Keratinocyte (primary cell): ENCODE measurements at regions of chr17 and their contacts with region 1.

Region 1: GRCh38 chr17:44636562-44636961 is 19.7 kb upstream of the MEIOC start:
- DNase-seq: no peak
- H3K4me3 ChIP-seq: no peak overlapping the region
- H3K27ac ChIP-seq: no peak overlapping the region
- H3K4me1 ChIP-seq: no peaks in the 10 kb centered on the region
- H3K27me3 ChIP-seq: peaks cover 4% of the 10 kb centered on the region
- CTCF ChIP-seq: peak in 2 of 3 experiments; percentile 8 to 37

Region 2: DNA sequence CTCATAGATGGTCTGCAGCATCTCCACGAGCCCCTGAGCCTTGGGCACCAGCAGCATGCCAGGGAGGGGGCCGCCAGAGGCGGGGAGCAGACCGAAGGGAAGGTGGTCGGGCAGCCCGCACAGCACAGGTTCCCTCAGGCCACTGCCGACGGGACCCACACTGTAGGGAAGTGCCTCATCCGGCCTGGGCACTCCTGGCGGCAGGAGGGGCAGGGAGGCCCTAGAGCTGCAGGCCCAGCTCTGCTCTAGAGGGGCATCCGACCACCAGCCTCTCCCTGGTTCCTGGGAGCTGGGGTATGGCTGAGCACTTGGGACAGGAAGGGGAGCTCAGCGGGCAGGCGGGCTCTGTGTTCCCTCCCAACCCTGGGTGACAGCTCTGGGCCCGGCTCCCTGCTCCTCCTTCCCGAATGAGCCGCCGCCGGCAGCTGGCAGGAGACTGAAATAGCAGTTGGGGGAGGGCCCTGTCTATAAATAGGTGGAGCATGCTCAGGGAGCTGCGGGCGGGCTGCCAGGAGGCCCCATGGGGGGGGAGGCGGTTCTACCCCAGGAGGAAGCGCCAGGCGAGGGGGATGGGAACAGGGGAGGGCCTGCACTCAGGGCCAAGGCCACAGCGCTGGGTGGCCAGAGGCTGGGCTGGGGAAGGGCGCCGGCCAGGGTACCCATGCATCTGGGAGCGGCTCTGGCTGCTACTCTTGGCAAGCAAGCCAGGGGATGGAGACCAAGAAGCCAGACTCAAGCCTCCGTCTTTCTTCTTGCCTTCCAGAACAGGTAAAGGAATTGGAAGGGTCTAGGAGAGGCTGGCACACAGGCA is 525.5 kb before region 1 on chr17:
- dilution Hi-C with region 1: no loop called
- DNase-seq: peak; percentile 54
- H3K4me3 ChIP-seq: peak overlapping the region in 2 of 3 experiments; percentile 1 to 15
- H3K27ac ChIP-seq: no peak overlapping the region
- H3K4me1 ChIP-seq: peaks cover 18% of the 10 kb centered on the region
- H3K27me3 ChIP-seq: peaks cover 5% of the 10 kb centered on the region
- CTCF ChIP-seq: peak in 1 of 3 experiments; percentile 2

Region 3: DNA sequence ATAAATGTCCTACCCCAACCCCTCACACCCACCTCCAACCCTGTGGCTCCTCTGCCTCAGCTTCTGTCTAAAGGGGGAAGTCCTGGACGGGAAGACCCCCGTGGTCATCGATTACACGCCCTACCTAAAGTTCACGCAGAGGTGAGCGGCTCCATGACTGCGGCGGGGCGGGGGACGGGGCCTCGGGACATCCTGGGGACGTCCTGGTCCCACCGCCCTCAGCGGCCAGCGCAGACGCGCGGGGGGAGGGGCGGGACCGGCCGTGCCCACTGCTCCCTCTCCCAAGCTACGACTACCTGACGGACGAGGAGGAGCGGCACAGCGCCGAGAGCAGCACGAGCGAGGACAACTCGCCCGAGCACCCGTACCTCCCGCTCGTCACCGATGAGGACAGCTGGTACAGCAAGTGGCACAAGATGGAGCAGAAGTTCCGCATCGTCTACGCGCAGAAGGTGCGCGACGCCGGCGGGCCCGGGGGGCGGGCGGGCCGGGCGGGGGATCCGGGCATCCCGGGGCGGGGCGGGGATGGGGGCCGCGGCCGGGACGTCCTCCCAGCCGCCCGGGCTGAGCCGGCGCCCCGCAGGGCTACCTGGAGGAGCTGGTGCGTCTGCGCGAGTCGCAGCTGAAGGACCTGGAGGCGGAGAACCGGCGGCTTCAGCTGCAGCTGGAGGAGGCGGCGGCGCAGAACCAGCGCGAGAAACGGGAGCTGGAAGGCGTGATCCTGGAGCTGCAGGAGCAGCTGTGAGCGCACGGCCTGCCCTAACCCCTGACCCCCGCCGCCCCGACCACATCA is 321.5 kb before region 1 on chr17:
- dilution Hi-C with region 1: no loop called
- DNase-seq: no peak
- H3K4me3 ChIP-seq: peak overlapping the region; percentile 39 to 42 (median 39)
- H3K27ac ChIP-seq: no peak overlapping the region
- H3K4me1 ChIP-seq: peaks cover 11% of the 10 kb centered on the region
- H3K27me3 ChIP-seq: peaks cover 31% of the 10 kb centered on the region
- CTCF ChIP-seq: no peak

Region 4: GRCh38 chr17:44533533-44534246 is 102.9 kb before region 1 on chr17:
- dilution Hi-C with region 1: loop called (anchors 10 kb)
- DNase-seq: no peak
- H3K4me3 ChIP-seq: no peak overlapping the region
- H3K27ac ChIP-seq: no peak overlapping the region
- H3K4me1 ChIP-seq: peaks cover 5% of the 10 kb centered on the region
- H3K27me3 ChIP-seq: no peaks in the 10 kb centered on the region
- CTCF ChIP-seq: peak; percentile 94 to 99 (median 95)